ENCODE measurements at regions of chr4 and their contacts with region 1.

Region 1: DNA sequence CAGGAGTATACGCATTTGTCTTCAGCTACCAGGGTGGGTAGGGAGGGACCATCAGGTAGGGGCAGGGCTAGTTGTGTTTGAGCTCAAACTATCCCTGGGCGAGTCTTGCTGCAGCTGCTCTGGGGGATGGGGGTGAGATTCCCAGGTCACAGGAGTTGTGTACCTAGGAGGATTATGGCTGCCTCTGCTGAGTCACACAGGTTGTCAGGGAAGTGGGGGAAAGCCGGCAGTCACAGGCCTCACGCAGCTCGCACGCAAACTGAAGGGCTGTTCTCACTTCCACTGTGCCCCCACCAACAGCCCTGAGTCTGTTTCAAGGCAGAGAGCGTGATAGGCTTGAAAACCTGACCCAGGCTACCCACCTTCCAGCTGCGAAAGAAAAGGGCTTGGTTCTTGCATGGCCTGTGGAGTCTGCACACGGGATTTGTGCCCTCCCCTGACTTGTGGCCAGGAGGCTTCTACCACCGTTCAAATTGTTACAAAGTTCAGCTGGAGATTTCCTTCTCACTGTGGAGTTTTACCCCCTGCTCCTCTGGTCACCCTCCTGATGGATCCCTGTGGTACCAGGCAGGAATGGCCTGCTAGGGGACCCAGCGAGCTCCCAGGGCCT is 63.8 kb downstream of the ARFIP1 start:
- DNase-seq: no peak
- H3K4me3 ChIP-seq: no peak overlapping the region
- H3K27ac ChIP-seq: no peak overlapping the region
- H3K4me1 ChIP-seq: no peaks in the 10 kb centered on the region
- H3K27me3 ChIP-seq: no peaks in the 10 kb centered on the region
- CTCF ChIP-seq: no peak

Region 2: DNA sequence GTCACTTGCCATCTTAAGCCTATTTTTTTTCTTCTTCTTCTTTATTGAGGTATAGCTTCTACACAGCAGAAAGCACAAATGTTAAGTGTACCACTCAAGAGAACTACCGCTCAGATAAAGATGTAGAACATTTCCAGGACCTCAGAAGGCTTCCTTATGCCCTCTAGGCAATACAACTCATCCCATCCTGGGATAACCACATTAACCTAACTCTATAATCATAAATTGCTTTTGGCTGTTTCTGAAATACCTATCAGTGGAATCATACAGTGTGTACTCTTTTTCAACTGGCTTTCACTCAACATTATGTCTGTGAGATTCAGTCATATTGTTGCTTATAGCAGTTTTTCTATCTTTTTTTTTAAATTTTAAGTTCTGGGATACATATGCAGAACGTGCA is 12.2 kb before region 1 on chr4:
- CTCF ChIA-PET with region 1: no interaction called
- POLR2A ChIA-PET with region 1: interaction called, 10 read pairs
- intact Hi-C with region 1: no loop called
- DNase-seq: no peak
- H3K4me3 ChIP-seq: no peak overlapping the region
- H3K27ac ChIP-seq: no peak overlapping the region
- H3K4me1 ChIP-seq: no peaks in the 10 kb centered on the region
- H3K27me3 ChIP-seq: no peaks in the 10 kb centered on the region
- CTCF ChIP-seq: no peak

Region 3: DNA sequence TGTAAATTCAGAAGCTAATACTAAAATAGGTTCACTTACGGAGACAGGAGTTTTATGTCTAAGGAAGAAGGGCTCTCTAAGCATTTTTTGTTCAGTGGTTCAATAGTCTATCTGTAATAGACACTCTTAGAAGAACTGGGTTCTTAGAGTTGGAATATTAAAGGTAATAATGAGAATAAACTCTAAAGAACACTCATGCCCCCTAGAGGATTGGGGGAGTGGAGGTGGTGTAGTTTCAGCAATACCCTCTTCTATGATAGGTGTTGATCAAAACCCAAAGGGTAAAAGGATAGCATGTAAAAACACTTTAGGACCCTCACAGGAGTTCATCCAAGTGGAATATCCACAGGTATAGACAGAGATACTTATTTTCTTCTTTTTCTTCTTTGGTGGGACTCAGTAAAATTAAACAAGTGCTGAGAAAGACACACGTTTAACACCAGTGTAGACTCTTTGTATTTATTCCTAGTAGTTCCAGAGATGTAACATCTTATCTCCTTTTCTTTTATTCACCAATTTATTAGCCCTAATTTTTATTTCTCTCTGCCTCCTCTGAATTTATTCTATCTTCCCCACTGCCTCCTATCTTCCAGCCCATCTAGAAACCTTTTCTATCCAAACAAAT is 475.2 kb after region 1 on chr4:
- CTCF ChIA-PET with region 1: no interaction called
- POLR2A ChIA-PET with region 1: no interaction called
- intact Hi-C with region 1: loop called (anchors 10 kb)
- DNase-seq: peak; percentile 82
- H3K4me3 ChIP-seq: no peak overlapping the region
- H3K27ac ChIP-seq: no peak overlapping the region
- H3K4me1 ChIP-seq: no peaks in the 10 kb centered on the region
- H3K27me3 ChIP-seq: no peaks in the 10 kb centered on the region
- CTCF ChIP-seq: peak; percentile 81

Region 4: GRCh38 chr4:154771123-154771522 is 1927.5 kb after region 1 on chr4:
- CTCF ChIA-PET with region 1: no interaction called
- POLR2A ChIA-PET with region 1: no interaction called
- intact Hi-C with region 1: no loop called
- DNase-seq: no peak
- H3K4me3 ChIP-seq: no peak overlapping the region
- H3K27ac ChIP-seq: no peak overlapping the region
- H3K4me1 ChIP-seq: no peaks in the 10 kb centered on the region
- H3K27me3 ChIP-seq: no peaks in the 10 kb centered on the region
- CTCF ChIP-seq: no peak